Stomach (tissue), 19 donors: ENCODE measurements at regions of chr10 and their contacts with region 1.

Region 1: DNA sequence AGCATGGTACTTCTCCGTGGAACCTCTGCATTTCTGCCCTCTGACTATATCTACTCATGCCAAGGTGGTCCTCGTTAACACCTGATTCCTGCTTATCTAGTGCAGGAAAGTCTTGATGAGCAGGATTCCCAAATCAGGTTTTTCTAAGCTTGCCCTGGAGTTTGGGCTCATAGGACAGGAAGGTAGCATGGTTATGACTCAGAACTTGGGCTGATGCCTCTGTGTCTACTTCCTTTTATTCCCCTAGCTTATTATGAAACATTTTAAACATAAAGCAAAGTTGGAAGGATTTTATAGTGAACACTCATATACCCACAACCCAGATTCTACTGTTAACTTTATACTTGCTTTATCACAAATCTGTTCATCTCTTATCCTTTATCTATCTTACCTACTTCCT is 5.6 kb downstream of the SUFU start:
- DNase-seq: no peak
- H3K4me3 ChIP-seq: no peak overlapping the region
- H3K27ac ChIP-seq: no peak overlapping the region
- H3K4me1 ChIP-seq: peaks cover 0 to 52% (median 26%) of the 10 kb centered on the region in 4 donors
- H3K27me3 ChIP-seq: no peaks in the 10 kb centered on the region
- CTCF ChIP-seq: no peak
- EP300 ChIP-seq: no peak
- POLR2A ChIP-seq: no peak

Region 2: GRCh38 chr10:102583435-102584417 is 74.3 kb after region 1 on chr10:
- intact Hi-C with region 1: loop called (anchors 5 kb)
- DNase-seq: peak; percentile 90 to 96
- H3K4me3 ChIP-seq: no peak overlapping the region
- H3K27ac ChIP-seq: no peak overlapping the region
- H3K4me1 ChIP-seq: peaks cover 0 to 36% (median 25%) of the 10 kb centered on the region in 4 donors
- H3K27me3 ChIP-seq: no peaks in the 10 kb centered on the region
- CTCF ChIP-seq: peak in 5 of 7 experiments; percentile 78 to 87 (median 82)
- EP300 ChIP-seq: no peak
- POLR2A ChIP-seq: no peak

Region 3: GRCh38 chr10:102729029-102730026 is 219.9 kb after region 1 on chr10:
- intact Hi-C with region 1: no loop called
- DNase-seq: peak; percentile 89 to 93
- H3K4me3 ChIP-seq: no peak overlapping the region
- H3K27ac ChIP-seq: peak overlapping the region in 1 of 5 donors; percentile 50
- H3K4me1 ChIP-seq: peaks cover 0 to 10% (median 8%) of the 10 kb centered on the region in 4 donors
- H3K27me3 ChIP-seq: no peaks in the 10 kb centered on the region
- CTCF ChIP-seq: peak in 6 of 7 experiments; percentile 50 to 94 (median 89)
- EP300 ChIP-seq: no peak
- POLR2A ChIP-seq: no peak